ENCODE measurements at regions of chr3 and their contacts with region 1.

Region 1: GRCh38 chr3:112013058-112013783 is 14.5 kb downstream of the TAGLN3 start:
- DNase-seq: peak; percentile 38
- H3K4me3 Mint-ChIP-seq: no peak overlapping the region
- H3K27ac Mint-ChIP-seq: peak overlapping the region; percentile 79
- H3K4me1 Mint-ChIP-seq: peaks cover 28% of the 10 kb centered on the region
- H3K27me3 Mint-ChIP-seq: no peaks in the 10 kb centered on the region

Region 2: GRCh38 chr3:111859974-111860859 is 153.0 kb before region 1 on chr3:
- intact Hi-C with region 1: loop called (anchors 1 kb)
- DNase-seq: peak; percentile 27
- H3K4me3 Mint-ChIP-seq: peak overlapping the region; percentile 85
- H3K27ac Mint-ChIP-seq: no peak overlapping the region
- H3K4me1 Mint-ChIP-seq: peaks cover 27% of the 10 kb centered on the region
- H3K27me3 Mint-ChIP-seq: peaks cover 61% of the 10 kb centered on the region

Region 3: GRCh38 chr3:111924283-111924682 is 88.9 kb before region 1 on chr3:
- intact Hi-C with region 1: no loop called
- DNase-seq: no peak
- H3K4me3 Mint-ChIP-seq: no peak overlapping the region
- H3K27ac Mint-ChIP-seq: no peak overlapping the region
- H3K4me1 Mint-ChIP-seq: no peaks in the 10 kb centered on the region
- H3K27me3 Mint-ChIP-seq: peaks cover 3% of the 10 kb centered on the region

Region 4: DNA sequence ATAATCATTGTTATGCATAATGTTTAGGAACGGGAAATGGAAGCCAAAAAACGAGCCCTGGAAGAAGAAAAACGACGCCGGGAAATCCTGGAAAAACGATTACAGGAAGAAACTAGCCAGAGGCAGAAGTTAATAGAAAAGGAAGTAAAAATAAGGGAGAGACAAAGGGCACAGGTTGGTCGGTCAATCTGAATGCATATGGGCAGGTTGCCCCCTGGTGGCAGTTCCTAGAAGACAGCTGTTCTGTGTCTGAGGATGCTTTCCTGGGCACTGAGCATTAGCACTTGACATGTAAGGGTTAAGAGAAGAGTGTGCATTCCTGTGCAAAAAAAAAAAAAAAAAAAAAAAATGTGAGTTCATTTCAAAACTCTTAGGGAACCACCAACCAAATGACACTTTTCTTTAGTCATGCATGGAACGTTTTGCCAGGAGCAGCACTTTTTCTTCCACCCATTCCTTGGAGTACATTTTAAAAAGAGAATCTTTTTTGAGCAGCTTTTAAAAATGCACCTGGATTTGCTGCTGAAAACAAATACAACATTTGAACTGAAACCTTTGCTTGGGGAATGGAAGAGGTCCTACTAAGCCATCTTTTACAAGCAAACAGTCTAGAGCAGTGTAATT is 45.5 kb before region 1 on chr3:
- intact Hi-C with region 1: loop called (anchors 1 kb)
- DNase-seq: peak; percentile 57
- H3K4me3 Mint-ChIP-seq: no peak overlapping the region
- H3K27ac Mint-ChIP-seq: no peak overlapping the region
- H3K4me1 Mint-ChIP-seq: peaks cover 29% of the 10 kb centered on the region
- H3K27me3 Mint-ChIP-seq: no peaks in the 10 kb centered on the region

Region 5: GRCh38 chr3:111998636-111999483 is 14.4 kb before region 1 on chr3 and contains the start of gene TAGLN3:
- intact Hi-C with region 1: loop called (anchors 1 kb)
- DNase-seq: no peak
- H3K4me3 Mint-ChIP-seq: peak within 1 kb of the TSS; percentile 66
- H3K27ac Mint-ChIP-seq: no peak within 1 kb of the TSS
- H3K4me1 Mint-ChIP-seq: peaks cover 51% of the 10 kb centered on the region
- H3K27me3 Mint-ChIP-seq: no peaks in the 10 kb centered on the region
- total RNA-seq, gene TAGLN3: 0.78 and 1.1 TPM in 2 replicates

Region 6: GRCh38 chr3:112056451-112056978 is 43.3 kb after region 1 on chr3:
- intact Hi-C with region 1: no loop called
- DNase-seq: no peak
- H3K4me3 Mint-ChIP-seq: no peak overlapping the region
- H3K27ac Mint-ChIP-seq: peak overlapping the region; percentile 53
- H3K4me1 Mint-ChIP-seq: peaks cover 31% of the 10 kb centered on the region
- H3K27me3 Mint-ChIP-seq: peaks cover 4% of the 10 kb centered on the region